PC-3 (cell line): ENCODE measurements at regions of chr1 and their contacts with region 1.

Region 1: DNA sequence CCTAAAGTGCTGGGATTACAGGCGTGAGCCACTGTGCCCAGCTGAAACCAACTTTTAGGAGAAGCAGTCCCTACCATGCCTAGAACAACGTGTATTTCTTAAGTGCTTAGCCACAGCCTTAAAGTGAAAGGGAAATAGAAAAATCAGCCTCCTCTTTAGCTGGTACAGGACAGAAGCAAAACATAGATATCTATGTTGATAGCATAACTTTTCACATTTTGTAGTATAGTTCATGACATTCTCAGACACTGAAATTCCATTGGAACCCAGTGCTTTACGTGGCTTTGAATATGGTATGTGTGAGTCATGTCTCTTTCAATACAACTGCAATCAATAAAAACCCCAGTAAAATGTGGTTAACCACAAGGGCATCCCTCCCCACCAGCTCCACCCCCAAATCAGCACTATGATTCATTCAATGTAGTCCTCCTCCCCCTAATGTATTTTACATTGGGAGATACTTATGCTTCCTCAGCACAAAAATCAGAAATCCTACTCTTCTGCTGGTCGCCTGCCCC is 32.1 kb downstream of the TGFB2 start:
- DNase-seq: peak; percentile 100
- ATAC-seq: peak; percentile 64
- H3K4me3 ChIP-seq: peak overlapping the region; percentile 57
- H3K27ac ChIP-seq: peak overlapping the region; percentile 91
- H3K4me1 ChIP-seq: peaks cover 90% of the 10 kb centered on the region
- H3K27me3 ChIP-seq: no peaks in the 10 kb centered on the region
- CTCF ChIP-seq: no peak

Region 2: GRCh38 chr1:218459878-218460711 is 82.9 kb after region 1 on chr1:
- CTCF ChIA-PET with region 1: interaction called, 3 read pairs
- POLR2A ChIA-PET with region 1: interaction called, 14 read pairs
- intact Hi-C with region 1: loop called (anchors 1 kb)
- DNase-seq: peak; percentile 99
- ATAC-seq: peak; percentile 95
- H3K4me3 ChIP-seq: peak overlapping the region; percentile 31
- H3K27ac ChIP-seq: peak overlapping the region; percentile 56
- H3K4me1 ChIP-seq: peaks cover 38% of the 10 kb centered on the region
- H3K27me3 ChIP-seq: no peaks in the 10 kb centered on the region
- CTCF ChIP-seq: no peak

Region 3: GRCh38 chr1:218480137-218480536 is 102.9 kb after region 1 on chr1:
- CTCF ChIA-PET with region 1: no interaction called
- POLR2A ChIA-PET with region 1: interaction called, 4 read pairs
- intact Hi-C with region 1: loop called (anchors 1 kb)
- DNase-seq: peak; percentile 83
- ATAC-seq: no peak
- H3K4me3 ChIP-seq: no peak overlapping the region
- H3K27ac ChIP-seq: peak overlapping the region; percentile 74
- H3K4me1 ChIP-seq: peaks cover 57% of the 10 kb centered on the region
- H3K27me3 ChIP-seq: no peaks in the 10 kb centered on the region
- CTCF ChIP-seq: no peak

Region 4: GRCh38 chr1:218557731-218558130 is 180.5 kb after region 1 on chr1:
- CTCF ChIA-PET with region 1: no interaction called
- POLR2A ChIA-PET with region 1: no interaction called
- intact Hi-C with region 1: loop called (anchors 1 kb)
- DNase-seq: peak; percentile 93
- ATAC-seq: peak; percentile 83
- H3K4me3 ChIP-seq: no peak overlapping the region
- H3K27ac ChIP-seq: no peak overlapping the region
- H3K4me1 ChIP-seq: peaks cover 11% of the 10 kb centered on the region
- H3K27me3 ChIP-seq: no peaks in the 10 kb centered on the region
- CTCF ChIP-seq: no peak

Region 5: DNA sequence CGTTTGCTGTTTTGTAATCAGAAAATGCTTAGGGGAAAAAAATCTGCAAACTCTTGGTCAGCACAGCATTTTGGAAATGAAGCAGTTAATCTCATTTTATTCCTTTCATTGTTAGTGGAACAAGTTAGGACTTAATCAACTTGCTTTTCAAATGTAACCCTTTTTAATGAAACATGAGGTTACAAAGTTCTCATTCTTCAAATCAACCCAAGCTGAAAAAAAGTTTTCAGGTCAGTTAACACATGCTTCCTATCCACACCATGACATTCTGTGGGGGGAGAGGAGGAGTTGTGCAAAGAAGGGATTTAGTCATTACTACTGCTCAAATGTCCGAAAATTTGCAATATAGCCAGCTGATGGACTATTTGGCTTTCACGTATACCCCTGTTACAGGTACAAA is 513.2 kb after region 1 on chr1:
- CTCF ChIA-PET with region 1: no interaction called
- POLR2A ChIA-PET with region 1: interaction called, 4 read pairs
- intact Hi-C with region 1: loop called (anchors 5 kb)
- DNase-seq: no peak
- ATAC-seq: no peak
- H3K4me3 ChIP-seq: no peak overlapping the region
- H3K27ac ChIP-seq: no peak overlapping the region
- H3K4me1 ChIP-seq: peaks cover 54% of the 10 kb centered on the region
- H3K27me3 ChIP-seq: no peaks in the 10 kb centered on the region
- CTCF ChIP-seq: no peak